Endothelial cell of umbilical vein (primary cell): ENCODE measurements at regions of chr16 and their contacts with region 1.

Region 1: DNA sequence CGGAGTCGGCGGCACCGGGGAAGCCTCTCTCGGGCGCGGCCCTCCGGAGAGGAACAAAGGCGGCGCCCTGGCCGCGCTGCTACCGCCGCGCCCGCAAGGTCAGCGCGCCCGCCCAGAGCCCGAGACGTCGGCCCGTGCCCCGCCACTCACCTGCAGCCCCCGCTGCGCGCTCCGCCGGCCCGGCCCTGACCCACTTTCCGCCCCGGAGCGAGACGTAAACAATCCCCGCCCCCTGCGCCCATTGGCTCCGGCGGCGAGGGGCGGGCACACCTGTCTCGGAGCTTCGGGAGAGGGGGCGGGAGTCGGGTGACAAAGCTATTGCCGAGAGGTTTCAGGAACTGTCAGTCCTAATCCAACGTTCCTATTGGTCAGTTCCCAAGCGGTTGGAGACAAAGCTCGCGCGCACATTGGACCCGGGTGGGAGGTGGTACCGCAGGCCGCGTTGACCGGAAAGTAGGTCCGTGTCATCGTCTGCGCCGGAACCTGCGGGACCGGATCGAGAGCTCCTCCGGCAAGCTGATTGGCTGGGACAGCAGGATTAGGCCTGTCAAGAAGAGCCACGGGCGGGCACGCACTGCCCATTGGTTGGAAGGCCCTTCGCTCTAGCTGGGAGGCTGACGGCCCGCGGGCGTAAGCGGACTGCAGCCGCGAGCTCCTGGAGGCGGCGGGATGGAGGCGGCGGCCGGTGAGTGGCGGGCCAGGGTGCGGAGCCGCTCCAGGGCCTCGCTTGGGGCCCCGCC is at the starts of genes NUBP2 and SPSB3:
- DNase-seq: peak; percentile 100
- H3K4me3 ChIP-seq: peak within 1 kb of the TSS; percentile 70 to 97 (median 90)
- H3K27ac ChIP-seq: peak within 1 kb of the TSS; percentile 53
- H3K4me1 ChIP-seq: peaks cover 14% of the 10 kb centered on the region
- H3K27me3 ChIP-seq: no peaks in the 10 kb centered on the region
- CTCF ChIP-seq: no peak
- POLR2A ChIP-seq: peak; percentile 33
- total RNA-seq, gene NUBP2: 55.0 and 58.2 TPM in 2 replicates
- total RNA-seq, gene SPSB3: 39.0 and 40.5 TPM in 2 replicates

Region 2: DNA sequence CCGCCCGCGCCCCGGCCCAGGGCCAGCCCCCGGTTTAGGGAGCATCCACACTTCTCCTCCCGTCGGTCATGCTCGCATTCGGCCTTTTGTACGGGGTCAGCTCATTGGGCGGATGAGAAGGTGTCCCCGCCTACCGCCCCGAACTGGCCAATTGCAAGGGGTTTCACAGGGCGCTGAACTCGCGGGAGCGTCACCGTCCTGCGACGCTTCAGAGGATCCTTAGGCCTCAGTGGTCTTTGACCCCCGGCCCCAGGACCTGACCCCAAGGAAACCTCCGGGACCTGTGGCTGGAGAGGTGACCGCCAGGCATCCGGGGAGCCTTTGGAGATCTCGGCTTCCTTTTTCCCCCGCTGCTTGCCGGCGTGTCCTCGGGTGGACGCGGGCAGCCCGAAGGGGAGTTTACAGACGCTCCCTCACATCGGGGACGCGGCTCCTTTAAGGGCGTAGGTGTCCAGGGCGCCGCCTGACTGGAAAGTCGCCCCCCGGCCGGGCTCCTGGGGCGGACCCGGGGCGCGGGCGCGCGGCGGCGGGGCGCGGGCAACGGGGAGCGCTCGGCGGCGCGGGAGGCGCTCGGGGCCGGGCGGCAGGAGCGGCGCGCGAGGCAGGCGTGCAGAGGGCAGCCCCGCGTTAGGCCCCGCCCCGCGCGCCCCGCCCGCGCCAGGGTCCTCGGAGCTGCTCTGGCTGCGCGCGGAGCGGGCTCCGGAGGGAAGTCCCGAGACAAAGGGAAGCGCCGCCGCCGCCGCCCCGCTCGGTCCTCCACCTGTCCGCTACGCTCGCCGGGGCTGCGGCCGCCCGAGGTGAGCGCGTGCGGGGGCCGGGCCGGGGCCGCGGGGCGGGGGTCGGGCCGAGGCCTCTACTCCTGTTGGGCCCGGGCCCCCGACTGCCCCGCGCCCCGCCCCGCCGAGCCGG is 473.3 kb before region 1 on chr16 and contains the start of gene UBE2I:
- CTCF ChIA-PET with region 1: no interaction called
- POLR2A ChIA-PET with region 1: no interaction called
- dilution Hi-C with region 1: no loop called
- intact Hi-C with region 1: loop called (anchors 10 kb)
- DNase-seq: peak; percentile 99
- H3K4me3 ChIP-seq: peak within 1 kb of the TSS; percentile 74 to 94 (median 87)
- H3K27ac ChIP-seq: peak within 1 kb of the TSS; percentile 87
- H3K4me1 ChIP-seq: peaks cover 14% of the 10 kb centered on the region
- H3K27me3 ChIP-seq: no peaks in the 10 kb centered on the region
- CTCF ChIP-seq: no peak
- POLR2A ChIP-seq: peak; percentile 57
- total RNA-seq, gene UBE2I: 230 and 233 TPM in 2 replicates

Region 3: GRCh38 chr16:1420111-1420540 is 362.4 kb before region 1 on chr16:
- CTCF ChIA-PET with region 1: no interaction called
- POLR2A ChIA-PET with region 1: interaction called, 6 read pairs
- dilution Hi-C with region 1: no loop called
- intact Hi-C with region 1: loop called (anchors 5 kb)
- DNase-seq: no peak
- H3K4me3 ChIP-seq: peak overlapping the region; percentile 44 to 80 (median 68)
- H3K27ac ChIP-seq: peak overlapping the region; percentile 56
- H3K4me1 ChIP-seq: peaks cover 9% of the 10 kb centered on the region
- H3K27me3 ChIP-seq: no peaks in the 10 kb centered on the region
- CTCF ChIP-seq: no peak
- POLR2A ChIP-seq: no peak

Region 4: GRCh38 chr16:1826691-1827575 is 44.4 kb after region 1 on chr16 and contains the starts of genes FAHD1 and HAGH:
- CTCF ChIA-PET with region 1: interaction called, 16 read pairs
- POLR2A ChIA-PET with region 1: interaction called, 3 read pairs
- dilution Hi-C with region 1: no loop called
- intact Hi-C with region 1: loop called (anchors 2 kb)
- DNase-seq: peak; percentile 99
- H3K4me3 ChIP-seq: peak within 1 kb of the TSS; percentile 47 to 91 (median 75)
- H3K27ac ChIP-seq: peak within 1 kb of the TSS; percentile 41
- H3K4me1 ChIP-seq: peaks cover 20% of the 10 kb centered on the region
- H3K27me3 ChIP-seq: no peaks in the 10 kb centered on the region
- CTCF ChIP-seq: no peak
- POLR2A ChIP-seq: peak; percentile 87
- total RNA-seq, gene FAHD1: 27.9 and 44.8 TPM in 2 replicates
- total RNA-seq, gene HAGH: 54.3 and 56.4 TPM in 2 replicates